ENCODE measurements at regions of chr10 and their contacts with region 1.

Region 1: GRCh38 chr10:110871298-110872084 is at the start of gene PDCD4:
- DNase-seq: peak; percentile 97
- ATAC-seq: peak; percentile 85
- H3K4me3 Mint-ChIP-seq: peak within 1 kb of the TSS; percentile 87
- H3K27ac Mint-ChIP-seq: peak within 1 kb of the TSS; percentile 95
- H3K4me1 Mint-ChIP-seq: peaks cover 63% of the 10 kb centered on the region
- H3K27me3 Mint-ChIP-seq: no peaks in the 10 kb centered on the region
- total RNA-seq, gene PDCD4: 69.8 to 125 TPM

Region 2: GRCh38 chr10:110181451-110181850 is 690.0 kb before region 1 on chr10:
- CTCF ChIA-PET with region 1: no interaction called
- POLR2A ChIA-PET with region 1: no interaction called
- intact Hi-C with region 1: no loop called
- DNase-seq: no peak
- ATAC-seq: no peak
- H3K4me3 Mint-ChIP-seq: no peak overlapping the region
- H3K27ac Mint-ChIP-seq: no peak overlapping the region
- H3K4me1 Mint-ChIP-seq: no peaks in the 10 kb centered on the region
- H3K27me3 Mint-ChIP-seq: peaks cover 15% of the 10 kb centered on the region

Region 3: GRCh38 chr10:110225756-110226542 is 645.5 kb before region 1 on chr10:
- CTCF ChIA-PET with region 1: no interaction called
- POLR2A ChIA-PET with region 1: no interaction called
- intact Hi-C with region 1: loop called in 1 of 2 experiments (anchors 5 kb)
- DNase-seq: peak; percentile 94
- ATAC-seq: peak; percentile 48
- H3K4me3 Mint-ChIP-seq: peak overlapping the region; percentile 95
- H3K27ac Mint-ChIP-seq: peak overlapping the region; percentile 95
- H3K4me1 Mint-ChIP-seq: peaks cover 44% of the 10 kb centered on the region
- H3K27me3 Mint-ChIP-seq: no peaks in the 10 kb centered on the region

Region 4: GRCh38 chr10:110567201-110568054 is 304.1 kb before region 1 on chr10 and contains the start of gene SMC3:
- CTCF ChIA-PET with region 1: no interaction called
- POLR2A ChIA-PET with region 1: no interaction called
- intact Hi-C with region 1: loop called (anchors 1 to 5 kb)
- DNase-seq: peak; percentile 95
- ATAC-seq: peak; percentile 84
- H3K4me3 Mint-ChIP-seq: peak within 1 kb of the TSS; percentile 93
- H3K27ac Mint-ChIP-seq: peak within 1 kb of the TSS; percentile 99
- H3K4me1 Mint-ChIP-seq: peaks cover 35% of the 10 kb centered on the region
- H3K27me3 Mint-ChIP-seq: peaks cover 13% of the 10 kb centered on the region
- total RNA-seq, gene SMC3: 76.8 to 83.5 TPM

Region 5: GRCh38 chr10:110803830-110804338 is 67.6 kb before region 1 on chr10:
- CTCF ChIA-PET with region 1: interaction called, 3 read pairs
- POLR2A ChIA-PET with region 1: no interaction called
- intact Hi-C with region 1: loop called in 1 of 2 experiments (anchors 5 kb)
- DNase-seq: peak; percentile 52
- ATAC-seq: peak; percentile 72
- H3K4me3 Mint-ChIP-seq: no peak overlapping the region
- H3K27ac Mint-ChIP-seq: peak overlapping the region; percentile 6
- H3K4me1 Mint-ChIP-seq: peaks cover 30% of the 10 kb centered on the region
- H3K27me3 Mint-ChIP-seq: no peaks in the 10 kb centered on the region

Region 6: DNA sequence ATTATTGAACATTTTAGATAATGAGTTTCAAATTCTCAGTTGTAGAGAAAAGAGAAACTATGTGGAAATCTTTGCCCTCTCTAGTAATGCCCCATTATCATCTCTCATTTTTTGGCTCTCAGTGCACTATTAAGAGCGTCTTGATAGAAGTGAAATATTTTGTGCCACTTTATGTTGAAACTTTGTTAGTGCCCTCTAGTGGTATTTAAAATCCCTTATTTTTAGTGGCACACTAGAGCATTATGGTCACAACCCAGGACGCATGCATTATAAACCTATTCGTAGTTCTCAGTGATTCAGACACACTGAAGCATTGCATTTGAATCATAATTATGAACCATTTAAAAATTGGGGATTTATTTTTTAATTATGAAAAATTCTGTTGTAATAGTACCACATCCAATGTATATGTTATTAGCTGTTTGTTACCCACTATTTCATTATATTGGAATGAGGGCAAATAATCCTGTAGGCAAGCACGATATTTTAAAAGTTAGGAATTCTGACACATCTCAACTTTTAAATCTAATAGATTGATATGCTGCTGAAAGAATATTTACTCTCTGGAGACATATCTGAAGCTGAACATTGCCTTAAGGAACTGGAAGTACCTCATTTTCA is 22.2 kb after region 1 on chr10:
- CTCF ChIA-PET with region 1: interaction called, 6 read pairs
- POLR2A ChIA-PET with region 1: interaction called, 4 read pairs
- intact Hi-C with region 1: loop called (anchors 1 to 2 kb)
- DNase-seq: no peak
- ATAC-seq: peak; percentile 87
- H3K4me3 Mint-ChIP-seq: no peak overlapping the region
- H3K27ac Mint-ChIP-seq: no peak overlapping the region
- H3K4me1 Mint-ChIP-seq: peaks cover 33% of the 10 kb centered on the region
- H3K27me3 Mint-ChIP-seq: no peaks in the 10 kb centered on the region